ENCODE measurements at regions of chr10 and their contacts with region 1.

Region 1: DNA sequence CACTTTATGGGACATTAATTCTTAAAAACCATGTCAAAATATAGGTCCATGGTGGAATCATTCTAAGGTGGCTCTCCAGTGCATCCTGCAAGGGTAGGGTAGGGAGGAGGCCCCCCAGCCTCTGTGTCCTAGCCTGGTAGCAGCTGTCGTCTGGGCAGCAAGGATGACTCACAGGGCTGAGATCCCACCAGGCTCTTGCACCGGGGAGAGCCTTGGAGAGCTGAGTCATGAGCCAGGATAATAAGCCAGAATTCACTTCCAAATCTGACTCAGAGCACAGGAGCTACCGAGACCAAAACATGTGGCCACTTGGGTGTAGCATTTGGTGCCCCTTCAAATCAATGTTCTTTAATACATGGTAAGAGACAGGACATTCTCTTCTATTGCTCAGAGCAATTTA is 298.5 kb downstream of the NEBL start:
- DNase-seq: peak; percentile 48 to 85
- H3K4me3 ChIP-seq: no peak overlapping the region
- H3K27ac ChIP-seq: no peak overlapping the region
- H3K4me1 ChIP-seq: peaks cover 5% of the 10 kb centered on the region in 2 donors
- H3K27me3 ChIP-seq: no peaks in the 10 kb centered on the region
- CTCF ChIP-seq: no peak

Region 2: GRCh38 chr10:20128811-20129210 is 469.8 kb before region 1 on chr10:
- intact Hi-C with region 1: no loop called
- DNase-seq: no peak
- H3K4me3 ChIP-seq: no peak overlapping the region
- H3K27ac ChIP-seq: no peak overlapping the region
- H3K4me1 ChIP-seq: no peaks in the 10 kb centered on the region
- H3K27me3 ChIP-seq: no peaks in the 10 kb centered on the region
- CTCF ChIP-seq: no peak

Region 3: DNA sequence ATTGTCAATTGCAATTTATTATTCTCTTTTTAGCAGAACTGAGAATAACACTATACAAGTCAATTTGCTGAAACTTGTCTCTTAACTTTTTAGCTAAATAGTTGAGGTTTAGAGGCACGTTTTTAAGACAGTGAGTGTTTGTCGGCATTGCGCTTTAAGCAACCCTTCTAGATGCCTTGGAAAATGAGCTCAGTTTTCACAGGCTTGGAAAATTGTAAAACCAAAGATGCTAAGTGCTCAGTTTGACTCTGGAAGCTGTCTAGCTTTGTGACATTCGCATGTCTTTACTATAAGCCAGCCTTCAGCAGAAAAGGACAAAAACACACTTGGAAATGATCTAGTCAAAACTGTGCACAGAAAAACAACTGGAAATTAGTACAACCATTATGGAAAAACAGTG is 201.9 kb before region 1 on chr10:
- intact Hi-C with region 1: no loop called
- DNase-seq: no peak
- H3K4me3 ChIP-seq: no peak overlapping the region
- H3K27ac ChIP-seq: no peak overlapping the region
- H3K4me1 ChIP-seq: no peaks in the 10 kb centered on the region
- H3K27me3 ChIP-seq: no peaks in the 10 kb centered on the region
- CTCF ChIP-seq: no peak

Region 4: DNA sequence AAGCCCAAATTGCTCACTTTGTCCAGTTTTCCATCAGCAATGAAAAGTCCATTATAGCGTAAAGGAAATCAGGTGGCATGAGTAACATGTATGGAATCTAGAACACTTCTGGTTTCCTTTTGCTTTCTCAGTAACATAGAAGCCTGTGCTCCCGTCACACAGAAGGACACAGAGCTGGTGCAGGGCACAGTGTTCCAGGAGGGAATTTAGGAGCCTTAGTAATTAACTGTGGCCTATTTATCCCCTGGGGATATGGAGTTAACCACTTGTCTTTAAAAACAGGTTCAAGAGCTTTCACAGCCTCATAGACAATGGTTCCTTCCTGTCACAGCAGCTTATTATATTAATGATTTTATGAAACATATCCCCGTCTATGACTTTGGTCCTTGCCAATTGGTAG is 108.7 kb after region 1 on chr10:
- intact Hi-C with region 1: loop called (anchors 10 kb)
- DNase-seq: no peak
- H3K4me3 ChIP-seq: no peak overlapping the region
- H3K27ac ChIP-seq: no peak overlapping the region
- H3K4me1 ChIP-seq: no peaks in the 10 kb centered on the region
- H3K27me3 ChIP-seq: no peaks in the 10 kb centered on the region
- CTCF ChIP-seq: no peak

Region 5: GRCh38 chr10:20745556-20746375 is 147.2 kb after region 1 on chr10:
- intact Hi-C with region 1: no loop called
- DNase-seq: no peak
- H3K4me3 ChIP-seq: no peak overlapping the region
- H3K27ac ChIP-seq: peak overlapping the region; percentile 50 to 71
- H3K4me1 ChIP-seq: peaks cover 0 to 39% of the 10 kb centered on the region in 2 donors
- H3K27me3 ChIP-seq: no peaks in the 10 kb centered on the region
- CTCF ChIP-seq: no peak

Measured in ascending aorta (tissue), 2 donors.